ENCODE measurements at regions of chr3 and their contacts with region 1.

Region 1: DNA sequence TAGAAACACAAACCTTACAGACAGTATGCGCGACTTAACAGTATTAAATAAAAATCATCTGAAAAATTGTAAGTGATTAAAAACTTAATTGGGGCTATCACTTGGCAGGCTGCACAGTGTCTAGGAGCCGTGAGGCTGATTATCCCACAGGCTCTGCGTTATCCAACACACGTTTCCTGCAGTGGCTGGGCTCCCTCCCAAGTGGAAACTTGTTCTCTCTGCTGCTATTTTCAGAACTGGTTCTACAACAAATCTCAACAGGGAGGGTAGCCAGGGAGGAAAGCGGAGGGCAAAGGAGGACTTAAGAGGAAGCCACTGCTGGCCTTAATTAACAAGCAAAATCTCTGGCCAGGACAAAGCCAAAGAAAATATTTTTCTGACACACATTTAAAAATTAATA is 555.2 kb downstream of the MAGI1 start:
- DNase-seq: peak; percentile 70 to 86 (median 84)
- ATAC-seq: peak; percentile 84 to 93 (median 90)
- H3K4me3 ChIP-seq: peak overlapping the region in 1 of 12 donors; percentile 14
- H3K27ac ChIP-seq: peak overlapping the region in 11 of 12 donors; percentile 53 to 89 (median 76)
- H3K4me1 ChIP-seq: peaks cover 13 to 76% (median 56%) of the 10 kb centered on the region in 12 donors
- H3K27me3 ChIP-seq: no peaks in the 10 kb centered on the region
- CTCF ChIP-seq: no peak
- POLR2A ChIP-seq: no peak

Region 2: DNA sequence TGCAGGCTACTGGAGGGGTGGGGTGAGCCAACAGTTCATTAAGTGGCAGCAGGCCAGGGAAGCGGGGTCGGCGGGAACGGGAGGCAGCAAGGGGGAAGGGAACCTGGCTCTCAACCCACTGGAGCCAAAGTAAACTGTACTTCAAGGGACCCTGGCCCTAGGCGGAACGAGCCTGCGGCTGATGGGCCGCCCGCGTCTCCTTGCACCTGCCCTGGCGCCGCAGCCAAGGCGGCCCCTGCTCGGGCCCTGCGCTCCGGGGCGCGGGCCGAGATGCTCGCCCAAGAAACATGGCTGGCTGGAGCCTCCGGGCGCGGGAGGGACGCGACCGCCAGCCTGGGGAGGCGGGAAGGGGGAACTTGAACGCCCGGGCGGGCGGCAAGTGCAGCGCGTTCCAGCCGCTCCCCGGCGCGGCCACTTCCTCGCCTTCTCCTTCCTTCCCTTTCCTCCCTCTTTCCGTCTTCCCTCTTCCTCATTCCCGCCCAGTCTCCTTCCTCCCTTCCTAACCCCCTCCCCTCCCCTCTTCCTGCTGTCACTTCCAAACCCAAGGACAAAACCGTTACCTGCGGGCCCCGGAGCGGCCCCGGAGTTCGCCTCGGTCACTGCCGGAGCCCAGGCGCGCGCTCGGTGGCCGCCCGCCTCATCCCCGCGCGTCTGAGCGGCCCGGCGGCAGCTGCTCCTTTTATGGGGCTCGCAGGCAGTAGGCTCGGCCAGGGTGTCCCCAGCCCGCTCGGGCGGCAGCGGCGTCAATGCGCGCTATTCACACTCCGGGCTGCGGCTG is 65.6 kb after region 1 on chr3:
- intact Hi-C with region 1: loop called in 1 of 10 experiments (anchors 10 kb)
- DNase-seq: peak; percentile 33 to 72 (median 54)
- ATAC-seq: peak; percentile 48 to 91 (median 84)
- H3K4me3 ChIP-seq: peak overlapping the region; percentile 33 to 82 (median 61)
- H3K27ac ChIP-seq: peak overlapping the region in 10 of 12 donors; percentile 50 to 85 (median 72)
- H3K4me1 ChIP-seq: peaks cover 0 to 46% (median 16%) of the 10 kb centered on the region in 12 donors
- H3K27me3 ChIP-seq: peaks cover 0 to 8% (median 0%) of the 10 kb centered on the region in 9 donors
- CTCF ChIP-seq: no peak
- POLR2A ChIP-seq: no peak

Region 3: GRCh38 chr3:65561617-65562016 is 78.1 kb after region 1 on chr3:
- intact Hi-C with region 1: loop called in 2 of 10 experiments (anchors 5 kb)
- DNase-seq: no peak
- ATAC-seq: no peak
- H3K4me3 ChIP-seq: no peak overlapping the region
- H3K27ac ChIP-seq: no peak overlapping the region
- H3K4me1 ChIP-seq: peaks cover 0 to 68% (median 26%) of the 10 kb centered on the region in 12 donors
- H3K27me3 ChIP-seq: no peaks in the 10 kb centered on the region
- CTCF ChIP-seq: no peak
- POLR2A ChIP-seq: no peak

Region 4: GRCh38 chr3:65742914-65743313 is 259.4 kb after region 1 on chr3:
- intact Hi-C with region 1: no loop called
- DNase-seq: no peak
- ATAC-seq: no peak
- H3K4me3 ChIP-seq: no peak overlapping the region
- H3K27ac ChIP-seq: no peak overlapping the region
- H3K4me1 ChIP-seq: peaks cover 0 to 18% (median 2%) of the 10 kb centered on the region in 12 donors
- H3K27me3 ChIP-seq: no peaks in the 10 kb centered on the region
- CTCF ChIP-seq: no peak
- POLR2A ChIP-seq: no peak

Measured in heart left ventricle (tissue), 16 donors.